Endothelial cell of umbilical vein (primary cell): ENCODE measurements at regions of chr6 and their contacts with region 1.

Region 1: DNA sequence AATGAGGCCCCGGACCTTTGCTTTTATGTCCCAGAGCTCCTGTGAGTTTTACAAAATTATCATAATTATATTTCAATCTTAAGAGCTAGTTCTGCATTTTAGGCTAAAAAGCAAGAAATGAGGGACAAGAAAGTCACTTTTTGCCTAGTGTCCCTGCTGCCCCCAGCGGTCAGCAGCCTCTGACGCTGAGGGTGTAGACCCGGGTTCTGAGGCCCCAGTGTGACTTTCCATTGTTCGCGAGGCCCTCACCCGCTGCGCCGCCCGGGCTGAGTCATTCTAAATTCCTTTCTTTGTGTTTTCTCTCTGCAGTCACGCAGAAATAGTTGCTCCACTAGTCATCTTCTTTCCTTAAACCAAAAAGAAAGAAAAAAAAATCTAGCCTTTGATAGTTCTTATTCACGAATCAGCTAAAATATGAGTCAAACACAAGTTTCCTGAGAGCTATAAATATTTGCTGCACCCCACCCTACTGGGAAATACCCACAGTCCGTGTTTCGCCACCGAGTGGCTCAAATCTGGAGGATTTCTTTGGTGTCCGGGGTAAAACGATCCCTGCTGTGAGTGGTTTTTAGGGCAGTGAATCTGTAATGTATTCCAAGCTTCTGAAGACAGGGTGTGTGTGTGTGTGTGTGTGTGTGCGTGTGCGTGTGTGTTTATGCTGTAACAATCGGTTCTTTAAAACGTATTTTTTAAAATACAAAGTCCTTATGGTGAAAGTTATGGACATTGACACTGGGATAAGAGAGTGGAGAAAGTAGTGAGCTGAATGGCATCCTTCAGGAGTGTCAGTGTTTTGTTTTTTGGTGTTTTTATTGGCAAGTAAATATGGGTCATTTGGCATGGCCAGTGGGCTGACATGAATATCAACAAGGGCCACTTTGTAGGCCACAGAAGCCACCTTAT is 59.7 kb upstream of the EEF1A1 start:
- DNase-seq: peak; percentile 99
- H3K4me3 ChIP-seq: peak overlapping the region; percentile 12 to 78 (median 32)
- H3K27ac ChIP-seq: peak overlapping the region; percentile 100
- H3K4me1 ChIP-seq: peaks cover 32% of the 10 kb centered on the region
- H3K27me3 ChIP-seq: no peaks in the 10 kb centered on the region
- CTCF ChIP-seq: peak; percentile 67 to 69
- POLR2A ChIP-seq: peak; percentile 90

Region 2: DNA sequence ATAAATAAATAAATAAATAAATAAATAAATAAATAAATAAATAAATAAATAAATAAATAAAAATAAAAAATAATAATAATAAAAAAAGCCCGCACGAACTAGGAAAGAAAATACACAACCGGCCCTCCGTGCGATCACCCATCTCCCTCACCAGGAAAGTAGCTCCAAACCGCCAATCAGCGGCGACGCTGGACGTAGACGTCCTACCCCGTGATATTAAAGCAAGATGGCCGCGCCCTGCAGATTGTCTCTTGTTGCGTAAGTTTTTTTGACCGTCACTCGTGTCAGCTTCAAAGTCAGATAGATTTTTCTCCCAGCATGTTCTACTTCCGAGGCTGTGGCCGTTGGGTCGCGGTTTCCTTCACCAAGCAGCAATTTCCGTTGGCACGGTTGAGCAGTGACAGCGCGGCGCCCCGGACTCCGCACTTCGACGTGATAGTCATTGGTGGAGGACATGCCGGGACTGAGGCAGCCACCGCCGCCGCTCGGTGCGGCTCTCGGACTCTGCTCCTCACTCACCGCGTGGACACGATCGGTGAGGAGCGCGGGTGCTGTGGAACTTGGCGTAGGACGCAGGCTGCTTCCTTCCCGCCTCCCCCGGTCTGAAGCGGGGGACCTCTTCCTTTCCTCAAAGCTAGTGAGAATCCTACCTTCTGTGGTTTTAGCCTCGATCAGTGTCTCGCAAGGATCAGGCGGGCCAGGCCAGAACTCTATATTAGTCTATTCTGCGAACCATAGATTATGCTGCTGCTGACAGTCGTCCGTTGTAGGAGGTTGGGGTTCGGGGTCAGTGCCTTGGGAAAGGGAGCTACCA is 118.8 kb before region 1 on chr6 and contains the start of gene MTO1:
- CTCF ChIA-PET with region 1: no interaction called
- POLR2A ChIA-PET with region 1: no interaction called
- dilution Hi-C with region 1: no loop called
- intact Hi-C with region 1: loop called (anchors 5 kb)
- DNase-seq: peak; percentile 90
- H3K4me3 ChIP-seq: peak within 1 kb of the TSS; percentile 80 to 92 (median 81)
- H3K27ac ChIP-seq: peak within 1 kb of the TSS; percentile 71
- H3K4me1 ChIP-seq: peaks cover 6% of the 10 kb centered on the region
- H3K27me3 ChIP-seq: no peaks in the 10 kb centered on the region
- CTCF ChIP-seq: no peak
- POLR2A ChIP-seq: peak; percentile 97
- total RNA-seq, gene MTO1: 24.8 and 25.1 TPM in 2 replicates

Region 3: DNA sequence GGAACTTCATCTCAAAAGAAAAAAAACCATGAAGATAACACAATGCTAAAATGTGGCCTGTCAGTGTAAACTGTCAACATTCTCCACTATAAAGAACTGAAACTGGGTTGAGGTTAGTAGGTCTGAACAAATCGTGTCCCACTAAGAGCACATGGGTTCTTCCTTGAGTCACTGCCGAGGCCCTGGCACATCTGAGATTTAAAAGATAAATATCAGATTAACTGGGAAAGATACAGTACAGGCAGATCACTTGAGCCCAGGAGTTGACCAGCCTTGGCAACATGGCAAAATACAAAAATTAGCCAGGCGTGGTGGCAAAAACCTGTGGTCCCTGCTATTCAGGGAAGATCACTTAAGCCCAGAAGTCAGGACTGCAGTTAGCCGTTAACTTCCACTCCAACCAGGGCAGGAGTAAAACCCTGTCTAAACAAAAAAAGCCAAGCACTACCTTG is 65.3 kb before region 1 on chr6:
- CTCF ChIA-PET with region 1: interaction called, 32 read pairs
- POLR2A ChIA-PET with region 1: interaction called, 74 read pairs
- dilution Hi-C with region 1: loop called (anchors 10 kb)
- intact Hi-C with region 1: loop called (anchors 1 kb)
- DNase-seq: no peak
- H3K4me3 ChIP-seq: no peak overlapping the region
- H3K27ac ChIP-seq: peak overlapping the region; percentile 6
- H3K4me1 ChIP-seq: peaks cover 15% of the 10 kb centered on the region
- H3K27me3 ChIP-seq: no peaks in the 10 kb centered on the region
- CTCF ChIP-seq: no peak
- POLR2A ChIP-seq: no peak

Region 4: DNA sequence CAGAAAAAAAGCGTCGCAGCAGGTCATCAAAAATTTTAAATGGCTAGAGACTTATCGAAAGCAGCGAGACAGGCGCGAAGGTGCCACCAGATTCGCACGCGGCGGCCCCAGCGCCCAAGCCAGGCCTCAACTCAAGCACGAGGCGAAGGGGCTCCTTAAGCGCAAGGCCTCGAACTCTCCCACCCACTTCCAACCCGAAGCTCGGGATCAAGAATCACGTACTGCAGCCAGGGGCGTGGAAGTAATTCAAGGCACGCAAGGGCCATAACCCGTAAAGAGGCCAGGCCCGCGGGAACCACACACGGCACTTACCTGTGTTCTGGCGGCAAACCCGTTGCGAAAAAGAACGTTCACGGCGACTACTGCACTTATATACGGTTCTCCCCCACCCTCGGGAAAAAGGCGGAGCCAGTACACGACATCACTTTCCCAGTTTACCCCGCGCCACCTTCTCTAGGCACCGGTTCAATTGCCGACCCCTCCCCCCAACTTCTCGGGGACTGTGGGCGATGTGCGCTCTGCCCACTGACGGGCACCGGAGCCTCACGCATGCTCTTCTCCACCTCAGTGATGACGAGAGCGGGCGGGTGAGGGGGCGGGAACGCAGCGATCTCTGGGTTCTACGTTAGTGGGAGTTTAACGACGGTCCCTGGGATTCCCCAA is 59.7 kb before region 1 on chr6 and contains the start of gene EEF1A1:
- CTCF ChIA-PET with region 1: interaction called, 32 read pairs
- POLR2A ChIA-PET with region 1: interaction called, 74 read pairs
- dilution Hi-C with region 1: loop called (anchors 10 kb)
- intact Hi-C with region 1: loop called (anchors 1 kb)
- DNase-seq: peak; percentile 100
- H3K4me3 ChIP-seq: peak within 1 kb of the TSS; percentile 85 to 99 (median 95)
- H3K27ac ChIP-seq: peak within 1 kb of the TSS; percentile 100
- H3K4me1 ChIP-seq: peaks cover 34% of the 10 kb centered on the region
- H3K27me3 ChIP-seq: no peaks in the 10 kb centered on the region
- CTCF ChIP-seq: no peak
- POLR2A ChIP-seq: peak; percentile 100
- total RNA-seq, gene EEF1A1: 9,186 and 9,456 TPM in 2 replicates

Region 5: GRCh38 chr6:73566954-73567591 is 13.4 kb before region 1 on chr6:
- CTCF ChIA-PET with region 1: interaction called, 12 read pairs
- POLR2A ChIA-PET with region 1: interaction called, 5 read pairs
- dilution Hi-C with region 1: no loop called
- intact Hi-C with region 1: no loop called
- DNase-seq: peak; percentile 32
- H3K4me3 ChIP-seq: no peak overlapping the region
- H3K27ac ChIP-seq: no peak overlapping the region
- H3K4me1 ChIP-seq: no peaks in the 10 kb centered on the region
- H3K27me3 ChIP-seq: no peaks in the 10 kb centered on the region
- CTCF ChIP-seq: no peak
- POLR2A ChIP-seq: no peak

Region 6: GRCh38 chr6:73610444-73611275 is 30.2 kb after region 1 on chr6:
- CTCF ChIA-PET with region 1: interaction called, 13 read pairs
- POLR2A ChIA-PET with region 1: no interaction called
- dilution Hi-C with region 1: no loop called
- intact Hi-C with region 1: loop called (anchors 1 kb)
- DNase-seq: peak; percentile 77
- H3K4me3 ChIP-seq: no peak overlapping the region
- H3K27ac ChIP-seq: no peak overlapping the region
- H3K4me1 ChIP-seq: no peaks in the 10 kb centered on the region
- H3K27me3 ChIP-seq: no peaks in the 10 kb centered on the region
- CTCF ChIP-seq: peak; percentile 28 to 31
- POLR2A ChIP-seq: no peak

Region 7: DNA sequence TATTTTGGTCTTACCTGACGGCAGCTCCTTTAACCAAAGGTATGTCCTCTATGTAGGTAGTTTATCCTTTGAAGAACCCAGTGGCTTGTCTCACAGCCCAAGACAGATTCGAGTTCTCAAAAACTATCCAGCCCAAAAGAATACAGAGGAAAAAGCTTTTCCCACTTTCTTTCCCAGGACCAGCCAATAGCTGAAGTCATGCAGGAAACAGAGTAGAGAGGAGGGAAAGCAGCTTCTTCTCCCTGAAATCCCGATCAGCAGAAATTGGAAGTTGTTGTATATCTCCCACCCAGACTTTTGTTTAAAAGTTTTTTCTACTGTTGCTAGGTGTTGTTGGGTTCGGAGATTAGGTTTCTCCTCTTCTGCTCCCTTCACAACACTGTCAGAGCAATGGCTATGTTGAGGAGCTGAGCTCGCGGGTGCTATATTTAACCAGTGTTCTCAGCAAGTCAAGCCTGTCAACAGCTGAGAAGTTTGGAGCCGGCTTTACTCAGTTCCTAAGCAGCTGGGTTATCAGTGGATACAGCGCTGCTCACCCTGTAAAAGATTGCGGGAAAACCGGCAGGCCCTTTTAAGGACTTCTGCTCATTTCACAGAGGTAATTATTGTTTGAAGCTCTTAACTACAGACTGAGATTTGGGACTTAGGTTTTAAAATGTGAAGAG is 1913.0 kb after region 1 on chr6 and contains the start of gene FILIP1:
- CTCF ChIA-PET with region 1: no interaction called
- POLR2A ChIA-PET with region 1: no interaction called
- dilution Hi-C with region 1: no loop called
- intact Hi-C with region 1: loop called (anchors 10 kb)
- DNase-seq: no peak
- H3K4me3 ChIP-seq: peak within 1 kb of the TSS in 1 of 3 experiments; percentile 7
- H3K27ac ChIP-seq: no peak within 1 kb of the TSS
- H3K4me1 ChIP-seq: peaks cover 22% of the 10 kb centered on the region
- H3K27me3 ChIP-seq: no peaks in the 10 kb centered on the region
- CTCF ChIP-seq: no peak
- POLR2A ChIP-seq: no peak
- total RNA-seq, gene FILIP1: 12.6 and 13.7 TPM in 2 replicates